Panc1 (cell line): ENCODE measurements at regions of chr2 and their contacts with region 1.

Region 1: DNA sequence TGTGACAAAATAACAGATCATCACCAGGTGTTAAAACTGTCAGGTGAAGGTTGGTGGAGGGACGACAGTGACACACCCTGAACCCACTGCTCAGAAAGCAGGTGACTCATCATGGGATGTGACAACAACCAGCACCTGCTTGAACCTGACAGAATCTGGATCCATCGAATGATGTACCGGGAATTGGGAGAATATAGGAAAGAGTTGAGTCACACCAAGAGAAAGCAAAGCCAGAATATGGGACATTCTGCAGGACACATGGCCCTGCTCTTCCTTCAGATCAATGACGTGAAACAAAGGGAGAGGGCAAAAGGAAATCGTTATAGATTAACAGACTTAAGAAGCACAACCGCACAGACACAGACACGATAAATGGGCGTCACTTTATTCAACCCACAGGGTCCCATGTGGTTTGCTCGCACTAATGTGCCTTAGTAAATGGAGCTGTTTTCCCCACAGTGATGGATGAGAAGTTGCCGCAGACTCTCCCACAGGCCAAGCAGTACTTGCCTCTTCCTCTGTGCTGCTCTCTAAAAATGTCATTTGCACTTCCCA is 100.1 kb downstream of the CRACDL start:
- DNase-seq: no peak
- ATAC-seq: no peak
- H3K4me3 ChIP-seq: no peak overlapping the region
- H3K27ac ChIP-seq: no peak overlapping the region
- H3K4me1 ChIP-seq: peaks cover 4% of the 10 kb centered on the region; the same call in 1 of the 2 replicates
- H3K27me3 ChIP-seq: no peaks in the 10 kb centered on the region
- CTCF ChIP-seq: no peak

Region 2: DNA sequence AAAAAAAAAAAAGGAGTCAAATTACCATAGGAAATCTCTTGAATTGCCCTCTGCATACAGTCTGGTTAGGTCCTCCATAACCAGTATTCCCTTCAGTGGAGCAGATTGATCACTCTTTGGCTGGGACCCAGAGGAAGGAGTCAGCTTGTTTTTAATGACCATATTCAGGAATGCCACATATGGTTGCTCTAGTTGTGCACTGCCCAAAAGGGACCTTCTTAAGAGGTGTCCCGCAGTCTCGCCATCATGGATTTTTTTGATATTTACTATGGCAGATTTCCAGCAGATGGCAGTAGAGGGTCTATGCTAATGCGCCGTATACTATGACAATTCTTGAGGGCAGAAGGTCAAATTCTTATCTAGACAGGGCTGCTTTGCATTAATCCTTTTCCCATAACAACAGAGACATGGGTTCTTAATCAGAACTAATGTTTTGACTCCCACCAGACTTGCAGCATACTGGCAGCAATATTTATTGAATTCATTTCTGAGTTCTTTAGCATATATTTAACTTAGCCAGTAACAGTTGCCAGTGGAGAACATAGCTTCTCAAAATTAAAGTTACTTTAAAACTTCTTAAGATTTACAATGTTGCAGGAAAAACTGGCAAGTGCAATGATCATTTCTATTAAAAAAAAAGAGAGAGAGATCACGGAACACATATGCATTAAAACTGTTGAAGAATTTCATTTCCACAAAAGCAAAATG is 423.0 kb before region 1 on chr2:
- CTCF ChIA-PET with region 1: no interaction called
- POLR2A ChIA-PET with region 1: no interaction called
- in situ Hi-C with region 1: no loop called
- intact Hi-C with region 1: loop called (anchors 5 kb)
- DNase-seq: peak; percentile 46
- ATAC-seq: peak; percentile 91
- H3K4me3 ChIP-seq: no peak overlapping the region
- H3K27ac ChIP-seq: no peak overlapping the region
- H3K4me1 ChIP-seq: no peaks in the 10 kb centered on the region
- H3K27me3 ChIP-seq: peaks cover 13% of the 10 kb centered on the region
- CTCF ChIP-seq: peak; percentile 83

Region 3: DNA sequence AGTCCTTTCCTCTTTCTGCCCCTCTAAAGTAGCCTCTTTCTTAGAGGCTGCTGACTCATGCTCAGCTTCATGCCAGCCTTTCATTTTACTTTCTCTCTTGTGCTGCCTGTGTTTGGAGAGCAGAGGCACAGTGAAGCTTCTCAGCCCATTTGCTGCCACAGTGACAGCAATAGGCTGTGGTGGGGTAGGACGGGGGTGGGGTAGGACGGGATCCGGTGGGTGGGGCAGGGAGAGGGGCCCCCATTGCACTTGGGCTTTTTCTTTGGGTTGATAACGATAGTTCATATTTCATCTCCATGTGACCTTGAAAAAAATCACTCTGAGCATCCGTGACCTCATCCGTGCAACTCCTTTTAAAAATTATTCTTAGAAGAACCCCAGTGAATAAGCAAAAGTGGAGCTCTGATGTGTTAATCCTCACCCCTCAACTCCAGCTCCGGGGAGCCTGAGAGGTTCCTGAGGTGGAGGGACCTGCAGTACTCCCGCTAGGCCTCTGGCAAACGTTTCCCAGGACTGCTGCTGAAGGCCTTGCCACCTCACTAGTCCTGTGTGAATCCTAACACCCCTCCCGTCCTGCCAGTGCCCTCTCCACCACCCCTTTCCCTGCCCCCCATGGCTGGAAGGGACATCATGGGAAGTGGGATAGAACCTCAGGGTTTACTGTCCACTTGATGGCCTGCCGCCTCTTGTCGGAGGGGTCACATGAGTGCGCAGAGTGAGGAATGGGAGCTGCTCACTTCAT is 320.5 kb before region 1 on chr2:
- CTCF ChIA-PET with region 1: no interaction called
- POLR2A ChIA-PET with region 1: interaction called, 10 read pairs
- in situ Hi-C with region 1: no loop called
- intact Hi-C with region 1: no loop called
- DNase-seq: no peak
- ATAC-seq: no peak
- H3K4me3 ChIP-seq: no peak overlapping the region
- H3K27ac ChIP-seq: no peak overlapping the region
- H3K4me1 ChIP-seq: peaks cover 2% of the 10 kb centered on the region; the same call in 1 of the 2 replicates
- H3K27me3 ChIP-seq: no peaks in the 10 kb centered on the region
- CTCF ChIP-seq: no peak

Region 4: DNA sequence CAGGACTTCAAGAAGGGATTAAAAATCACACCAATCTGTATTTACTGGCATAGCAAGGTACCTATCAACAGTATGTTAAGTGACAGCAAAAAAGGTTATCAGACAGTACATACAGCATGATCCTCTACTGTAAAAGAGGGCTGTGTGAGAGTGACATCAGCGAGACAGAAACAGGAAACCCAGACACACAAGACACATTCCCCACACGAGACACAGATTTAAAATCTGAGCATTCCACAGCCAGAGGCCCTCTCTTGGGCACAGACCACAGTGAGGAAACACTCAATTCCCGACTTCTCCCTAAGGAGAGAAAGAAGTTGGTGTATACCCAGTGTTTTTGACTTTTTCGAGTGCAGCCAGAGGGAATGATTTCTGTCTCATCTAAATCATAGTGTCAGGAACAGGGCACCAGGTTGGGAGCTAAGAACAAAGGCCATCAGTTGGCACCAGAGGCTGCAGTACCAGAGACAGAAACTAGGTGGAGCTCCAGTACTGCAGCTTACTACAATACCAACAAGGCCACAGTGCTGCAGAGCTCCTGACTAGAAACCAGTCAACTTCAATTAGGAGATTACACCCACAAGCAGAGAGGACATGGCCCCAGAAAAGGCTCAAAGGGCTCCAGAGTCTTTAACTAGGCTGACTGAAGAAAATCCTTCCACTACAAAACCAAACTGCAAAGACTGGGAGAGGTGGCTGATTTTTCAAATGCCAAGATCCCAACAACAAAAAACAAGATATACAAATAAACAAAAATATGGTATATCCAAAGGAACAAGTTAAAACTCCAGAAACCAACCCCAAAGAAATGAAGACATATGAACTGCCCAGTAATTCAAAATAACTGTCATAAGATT is 186.5 kb before region 1 on chr2:
- CTCF ChIA-PET with region 1: interaction called, 16 read pairs
- POLR2A ChIA-PET with region 1: no interaction called
- in situ Hi-C with region 1: no loop called
- intact Hi-C with region 1: loop called (anchors 1 kb)
- DNase-seq: peak; percentile 73
- ATAC-seq: peak; percentile 99
- H3K4me3 ChIP-seq: no peak overlapping the region
- H3K27ac ChIP-seq: no peak overlapping the region
- H3K4me1 ChIP-seq: no peaks in the 10 kb centered on the region
- H3K27me3 ChIP-seq: no peaks in the 10 kb centered on the region; the same call in 1 of the 2 replicates
- CTCF ChIP-seq: peak; percentile 98

Region 5: GRCh38 chr2:98676742-98677141 is 159.2 kb before region 1 on chr2:
- CTCF ChIA-PET with region 1: interaction called, 17 read pairs
- POLR2A ChIA-PET with region 1: no interaction called
- in situ Hi-C with region 1: no loop called
- intact Hi-C with region 1: no loop called
- DNase-seq: no peak
- ATAC-seq: no peak
- H3K4me3 ChIP-seq: no peak overlapping the region
- H3K27ac ChIP-seq: no peak overlapping the region
- H3K4me1 ChIP-seq: no peaks in the 10 kb centered on the region
- H3K27me3 ChIP-seq: no peaks in the 10 kb centered on the region
- CTCF ChIP-seq: no peak

Region 6: GRCh38 chr2:98893911-98894321 is 58.0 kb after region 1 on chr2:
- CTCF ChIA-PET with region 1: no interaction called
- POLR2A ChIA-PET with region 1: no interaction called
- in situ Hi-C with region 1: no loop called
- intact Hi-C with region 1: no loop called
- DNase-seq: no peak
- ATAC-seq: no peak
- H3K4me3 ChIP-seq: no peak overlapping the region
- H3K27ac ChIP-seq: no peak overlapping the region
- H3K4me1 ChIP-seq: no peaks in the 10 kb centered on the region
- H3K27me3 ChIP-seq: no peaks in the 10 kb centered on the region
- CTCF ChIP-seq: no peak

Region 7: GRCh38 chr2:98917031-98917471 is 81.1 kb after region 1 on chr2:
- CTCF ChIA-PET with region 1: no interaction called
- POLR2A ChIA-PET with region 1: no interaction called
- in situ Hi-C with region 1: no loop called
- intact Hi-C with region 1: no loop called
- DNase-seq: no peak
- ATAC-seq: peak; percentile 41
- H3K4me3 ChIP-seq: no peak overlapping the region
- H3K27ac ChIP-seq: no peak overlapping the region
- H3K4me1 ChIP-seq: peaks cover 10% of the 10 kb centered on the region
- H3K27me3 ChIP-seq: no peaks in the 10 kb centered on the region
- CTCF ChIP-seq: no peak

Region 8: DNA sequence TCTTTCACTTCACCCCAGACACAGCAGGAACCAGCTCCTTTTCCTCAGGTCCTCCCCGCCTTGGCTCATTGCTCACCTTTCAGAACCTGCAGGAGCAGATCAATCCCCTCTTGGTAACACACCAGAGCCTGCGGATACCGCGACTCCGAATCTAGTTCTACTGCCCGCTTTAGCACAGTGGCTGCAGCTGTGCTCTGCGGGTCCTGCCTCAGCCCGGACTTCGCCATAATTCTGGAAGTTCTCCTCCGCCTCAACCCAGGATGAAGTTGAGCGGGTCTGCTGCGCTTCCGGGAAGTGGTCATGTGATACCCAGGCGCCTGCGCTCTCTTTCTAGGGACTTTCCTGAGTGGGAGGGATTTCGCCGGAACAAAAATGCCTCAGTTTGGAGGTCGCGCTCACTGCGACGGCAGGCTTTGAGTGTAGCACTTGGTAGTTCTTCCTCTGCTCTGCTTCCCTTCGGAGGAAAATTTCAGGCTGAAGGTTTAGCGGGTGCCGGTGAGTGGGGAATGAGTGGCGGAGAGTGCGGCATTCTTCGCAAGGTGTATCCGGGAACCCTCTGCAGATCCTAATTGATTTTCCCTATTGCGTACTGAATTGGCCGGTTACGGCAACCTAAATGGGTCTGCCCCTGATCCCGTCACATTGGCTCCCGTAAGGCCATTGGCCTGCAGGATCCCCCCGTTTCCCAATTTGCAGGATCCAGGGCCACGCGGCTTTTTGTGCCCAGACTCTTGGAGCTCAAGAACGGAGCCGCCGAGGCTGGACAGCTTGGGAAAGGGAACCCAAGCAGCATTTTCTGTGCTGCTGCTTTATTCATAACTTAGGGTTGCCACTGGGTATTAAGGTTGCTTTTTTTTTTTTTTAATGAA is 345.1 kb after region 1 on chr2 and contains the starts of genes MITD1 and MRPL30:
- CTCF ChIA-PET with region 1: interaction called, 11 read pairs
- POLR2A ChIA-PET with region 1: no interaction called
- in situ Hi-C with region 1: no loop called
- intact Hi-C with region 1: no loop called
- DNase-seq: peak; percentile 94
- ATAC-seq: peak; percentile 98
- H3K4me3 ChIP-seq: peak within 1 kb of the TSS; percentile 68 to 99
- H3K27ac ChIP-seq: peak within 1 kb of the TSS; percentile 88
- H3K4me1 ChIP-seq: peaks cover 12% of the 10 kb centered on the region
- H3K27me3 ChIP-seq: no peaks in the 10 kb centered on the region
- CTCF ChIP-seq: no peak
- total RNA-seq, gene MITD1: 36.0 TPM
- total RNA-seq, gene MRPL30: 25.6 TPM